Right ventricle myocardium superior (tissue), 1 donor: ENCODE measurements at regions of chr14 and their contacts with region 1.

Region 1: DNA sequence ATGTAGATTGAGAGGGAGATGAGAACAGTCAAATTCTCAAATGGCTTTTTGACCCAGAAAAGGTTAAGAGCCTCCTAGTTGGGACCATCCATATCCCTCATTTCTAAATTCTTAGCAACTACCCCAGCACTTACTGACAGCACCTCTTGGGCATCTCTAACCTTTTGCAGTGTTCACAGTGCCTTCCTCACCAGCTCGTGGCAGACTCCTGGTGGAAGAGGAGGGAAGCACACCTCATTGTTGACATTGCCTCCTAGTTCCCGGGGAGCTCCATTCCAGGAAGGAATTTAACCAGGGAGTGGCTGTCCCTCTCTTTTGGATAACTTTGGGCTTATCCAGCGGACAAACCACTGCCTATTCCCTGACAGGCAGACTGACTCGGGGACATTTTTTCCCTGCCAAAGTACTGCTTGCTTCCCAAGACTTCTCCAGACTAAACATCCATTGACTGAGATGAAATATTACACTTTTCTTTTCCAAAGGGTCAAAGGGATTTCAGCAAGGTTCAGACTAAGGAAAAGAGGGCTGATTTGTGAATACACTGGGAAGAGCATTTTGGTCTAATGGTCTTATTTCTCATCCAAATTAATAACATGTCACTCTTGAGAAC is 9.0 kb upstream of the OR6J1 start:
- DNase-seq: peak; percentile 53
- ATAC-seq: peak; percentile 88

Region 2: GRCh38 chr14:22570132-22570949 is 82.8 kb before region 1 on chr14:
- intact Hi-C with region 1: loop called (anchors 5 kb)
- DNase-seq: no peak
- ATAC-seq: peak; percentile 86